ENCODE measurements at regions of chr22 and their contacts with region 1.

Region 1: DNA sequence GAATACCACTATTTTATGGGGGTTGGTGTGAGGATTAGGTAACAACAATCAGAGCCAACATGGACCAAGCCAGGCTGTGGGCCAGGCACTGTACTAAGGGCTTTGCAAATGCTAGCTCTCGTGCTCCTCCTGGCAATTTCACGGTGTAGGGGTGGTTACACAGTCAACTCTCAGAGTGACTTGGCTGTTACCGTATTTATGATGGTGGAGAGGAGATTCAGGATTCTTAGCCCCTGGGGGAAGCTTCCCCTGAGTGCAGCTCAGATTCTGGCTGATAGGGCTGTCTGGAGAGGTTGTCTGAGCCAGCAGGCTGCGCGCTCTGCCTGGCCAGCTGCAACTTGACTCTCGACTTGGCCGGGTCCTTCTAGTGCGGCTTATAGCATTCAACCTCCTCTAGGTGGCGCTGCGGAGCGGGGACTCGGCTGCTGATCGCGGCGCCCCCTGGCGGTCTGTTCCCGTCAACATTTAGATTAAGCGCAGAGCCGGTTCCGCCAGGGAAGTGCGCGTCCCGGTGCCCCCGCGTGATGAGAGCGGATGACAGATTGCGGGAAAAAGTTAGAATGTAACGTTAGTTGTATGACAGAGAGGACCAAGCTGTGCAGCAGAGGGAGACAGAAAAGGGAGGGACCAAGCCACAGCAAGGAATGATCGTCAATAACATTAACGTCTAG is 4.5 kb upstream of the NCF4 start:
- DNase-seq: peak; percentile 93 to 97
- ATAC-seq: peak; percentile 92
- H3K4me3 ChIP-seq: no peak overlapping the region
- H3K27ac ChIP-seq: no peak overlapping the region
- H3K4me1 ChIP-seq: no peaks in the 10 kb centered on the region
- H3K27me3 ChIP-seq: no peaks in the 10 kb centered on the region

Region 2: DNA sequence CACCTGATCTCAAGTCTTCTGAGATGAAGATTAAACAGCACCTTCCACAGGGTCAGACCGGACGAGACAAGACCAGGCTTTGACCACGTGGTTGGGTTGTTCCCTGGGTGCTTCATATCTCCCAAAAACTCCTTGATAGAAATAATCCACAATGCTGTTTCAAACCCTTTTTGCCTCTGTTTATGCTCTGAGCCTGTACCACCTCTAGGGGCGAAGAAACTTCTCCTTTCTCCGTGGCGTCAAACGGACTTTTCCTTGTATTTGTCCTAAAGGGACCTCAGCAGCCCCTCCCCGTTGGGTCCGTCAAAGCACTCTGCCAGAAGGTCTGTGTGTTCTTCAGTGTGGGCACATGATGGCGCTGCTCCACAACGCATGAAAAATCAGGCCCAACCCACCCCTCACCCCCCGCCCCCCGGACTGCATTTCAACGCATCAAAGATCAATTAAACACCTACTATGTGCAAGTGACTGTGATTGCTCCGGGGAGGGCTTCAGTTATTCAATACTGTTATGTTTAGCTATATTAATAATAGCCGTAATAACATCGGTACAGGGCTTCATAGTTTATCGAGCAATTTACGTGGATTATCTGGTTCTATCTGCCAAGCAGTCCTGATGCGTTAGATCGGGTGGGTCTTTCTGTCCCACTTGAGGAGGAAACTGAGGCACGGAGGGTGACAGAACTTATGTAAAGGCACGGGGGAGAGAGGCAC is 310.0 kb before region 1 on chr22:
- intact Hi-C with region 1: loop called in 1 of 2 experiments (anchors 5 kb)
- DNase-seq: peak in 1 of 2 donors; percentile 63
- ATAC-seq: no peak
- H3K4me3 ChIP-seq: no peak overlapping the region
- H3K27ac ChIP-seq: no peak overlapping the region
- H3K4me1 ChIP-seq: no peaks in the 10 kb centered on the region
- H3K27me3 ChIP-seq: peaks cover 0 to 4% of the 10 kb centered on the region in 2 donors

Region 3: DNA sequence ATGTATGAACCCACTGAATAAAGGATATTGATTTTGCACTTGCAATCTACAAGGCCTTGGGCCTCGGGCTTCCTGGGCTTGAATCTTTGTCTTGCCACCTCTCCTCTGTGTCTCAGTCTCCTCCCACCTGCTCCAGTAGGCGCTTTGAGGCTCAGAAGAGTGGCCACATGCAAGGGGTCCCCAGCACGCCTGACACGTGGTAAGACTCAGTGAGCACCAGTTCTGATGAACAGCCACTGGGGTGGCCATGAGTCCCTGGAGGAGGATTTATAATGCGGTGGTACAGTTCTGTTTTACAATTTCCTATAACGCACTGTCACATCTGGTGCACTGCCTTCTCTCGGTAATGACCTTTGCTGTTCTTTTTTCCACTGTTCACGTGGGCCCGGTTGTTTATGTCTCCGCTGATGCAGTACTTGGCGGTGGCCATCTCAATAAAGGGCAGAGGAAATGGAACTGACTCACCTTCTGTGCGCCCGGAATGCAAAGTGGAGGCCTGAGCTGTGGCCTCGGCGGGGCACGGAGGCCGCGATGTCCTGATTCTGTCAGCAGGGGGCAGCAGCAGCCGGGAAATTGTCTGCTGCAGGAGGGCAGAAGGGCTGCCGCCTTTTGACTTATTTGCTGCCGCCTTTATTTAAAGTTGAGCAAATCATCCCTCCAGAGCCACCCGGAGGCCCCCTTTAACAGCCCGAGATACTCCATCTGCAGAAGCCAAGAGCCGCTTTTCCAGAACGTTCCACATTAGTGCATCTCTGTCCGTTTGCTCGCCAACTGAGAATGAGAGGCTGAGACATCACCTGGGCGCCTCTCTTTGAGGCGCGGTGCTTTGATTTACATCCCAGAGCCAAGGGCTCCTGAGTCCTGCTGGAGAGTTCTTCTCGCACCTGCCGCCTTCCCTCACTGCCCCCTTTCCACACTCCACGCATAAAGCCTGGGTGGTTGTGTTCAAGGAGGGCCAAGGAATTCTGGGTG is 74.3 kb before region 1 on chr22:
- intact Hi-C with region 1: loop called in 1 of 2 experiments (anchors 2 kb)
- DNase-seq: peak; percentile 88 to 93
- ATAC-seq: peak; percentile 89
- H3K4me3 ChIP-seq: no peak overlapping the region
- H3K27ac ChIP-seq: no peak overlapping the region
- H3K4me1 ChIP-seq: no peaks in the 10 kb centered on the region
- H3K27me3 ChIP-seq: no peaks in the 10 kb centered on the region

Region 4: GRCh38 chr22:36795633-36796032 is 60.6 kb before region 1 on chr22:
- intact Hi-C with region 1: no loop called
- DNase-seq: no peak
- ATAC-seq: no peak
- H3K4me3 ChIP-seq: no peak overlapping the region
- H3K27ac ChIP-seq: no peak overlapping the region
- H3K4me1 ChIP-seq: no peaks in the 10 kb centered on the region
- H3K27me3 ChIP-seq: no peaks in the 10 kb centered on the region

Measured in aorta (tissue), 5 donors.